CD4-positive, alpha-beta T cell (primary cell): ENCODE measurements at regions of chr19 and their contacts with region 1.

Region 1: DNA sequence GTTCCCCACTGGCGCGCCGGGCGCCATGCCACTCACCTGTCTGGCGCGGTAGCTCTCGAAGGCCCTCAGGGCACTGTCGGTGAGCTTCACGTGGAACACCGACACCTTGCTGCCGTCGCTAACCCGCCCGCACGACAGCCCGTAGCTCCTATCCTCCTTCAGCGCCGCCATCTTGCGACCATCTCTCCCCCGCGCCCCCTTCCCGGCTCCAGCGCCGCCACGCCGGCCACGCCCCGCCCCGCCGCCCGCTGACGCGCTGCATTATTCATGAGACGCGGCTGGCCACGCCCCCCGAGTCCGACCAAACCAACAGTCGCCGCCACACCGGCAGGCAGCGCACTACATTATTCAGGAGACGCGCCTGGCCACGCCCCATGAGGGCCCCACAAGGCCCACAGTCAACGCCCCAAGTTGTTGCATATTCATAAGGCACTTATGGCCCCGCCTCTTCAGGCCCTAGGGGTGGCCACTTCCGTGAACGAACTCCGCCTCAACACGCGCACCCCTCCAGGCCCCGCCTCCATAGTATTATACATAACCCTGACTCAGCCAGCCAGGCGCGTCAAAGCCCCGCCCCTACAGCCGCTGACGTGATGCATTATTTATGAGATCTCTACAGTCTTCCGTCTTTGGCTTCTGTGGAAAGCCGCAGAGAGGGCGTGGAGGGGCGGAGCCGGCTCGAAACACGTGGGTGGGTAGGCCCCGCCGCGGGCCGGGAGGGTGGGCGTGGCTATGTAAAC is at the start of gene ELL:
- DNase-seq: peak; percentile 100
- ATAC-seq: peak; percentile 87
- H3K4me3 ChIP-seq: peak within 1 kb of the TSS; percentile 79
- H3K4me3 Mint-ChIP-seq: peak within 1 kb of the TSS; percentile 97
- H3K27ac ChIP-seq: peak within 1 kb of the TSS; percentile 90 to 95
- H3K27ac Mint-ChIP-seq: peak within 1 kb of the TSS; percentile 86
- H3K4me1 ChIP-seq: peaks cover 46% of the 10 kb centered on the region
- H3K4me1 Mint-ChIP-seq: peaks cover 13% of the 10 kb centered on the region
- H3K27me3 ChIP-seq: no peaks in the 10 kb centered on the region
- H3K27me3 Mint-ChIP-seq: no peaks in the 10 kb centered on the region
- CTCF ChIP-seq: no peak
- total RNA-seq, gene ELL: 46.2 to 46.8 TPM

Region 2: GRCh38 chr19:18483119-18483890 is 38.8 kb before region 1 on chr19:
- CTCF ChIA-PET with region 1: interaction called, 15 read pairs
- POLR2A ChIA-PET with region 1: interaction called, 3 read pairs
- intact Hi-C with region 1: no loop called
- DNase-seq: peak in 1 of 14 experiments; percentile 29
- ATAC-seq: no peak
- H3K4me3 ChIP-seq: no peak overlapping the region
- H3K4me3 Mint-ChIP-seq: no peak overlapping the region
- H3K27ac ChIP-seq: no peak overlapping the region
- H3K27ac Mint-ChIP-seq: no peak overlapping the region
- H3K4me1 ChIP-seq: peaks cover 90% of the 10 kb centered on the region
- H3K4me1 Mint-ChIP-seq: peaks cover 67% of the 10 kb centered on the region
- H3K27me3 ChIP-seq: no peaks in the 10 kb centered on the region
- H3K27me3 Mint-ChIP-seq: no peaks in the 10 kb centered on the region
- CTCF ChIP-seq: no peak

Region 3: DNA sequence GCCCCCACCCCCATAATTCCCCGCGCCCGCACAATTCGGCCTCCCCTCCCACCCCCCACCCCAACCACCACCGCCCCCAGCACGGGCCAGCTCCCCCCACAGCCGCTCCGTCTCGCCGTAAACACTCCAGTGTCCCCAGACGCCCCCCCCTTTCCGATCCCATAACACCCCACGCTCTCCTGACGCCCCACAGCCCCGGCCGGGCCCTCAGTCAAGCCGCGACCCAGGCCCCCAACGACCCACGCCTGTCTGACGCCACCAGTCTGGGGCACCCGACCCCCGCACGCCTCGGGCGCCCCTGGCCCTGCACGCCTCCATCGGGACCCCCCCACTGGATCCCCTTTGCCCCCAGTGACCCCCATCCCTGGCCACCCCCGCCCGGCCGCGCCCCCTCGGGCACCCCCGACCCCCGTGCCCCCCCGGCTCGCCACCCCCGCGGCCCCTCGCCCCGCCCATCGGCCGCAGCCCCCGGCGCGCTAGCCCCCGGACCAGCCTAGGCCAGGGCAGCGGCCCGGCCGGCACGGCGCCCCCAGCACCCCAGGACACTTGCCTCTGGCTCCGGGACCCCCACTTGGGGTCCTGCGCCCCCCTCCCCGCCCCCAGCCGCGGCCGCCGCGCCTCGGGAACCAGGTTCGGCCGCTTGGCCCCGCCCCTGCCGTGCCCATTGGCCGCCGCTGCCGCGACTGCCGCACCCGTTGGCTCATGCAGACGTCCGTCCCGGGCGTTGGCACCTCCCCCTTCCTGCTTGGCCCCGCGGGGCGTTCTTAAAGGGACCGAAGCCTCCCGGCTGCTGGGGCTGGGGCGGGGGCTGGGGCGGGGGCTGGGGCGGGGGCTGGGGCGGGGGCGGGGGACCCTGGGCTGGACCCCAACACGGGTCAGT is 21.1 kb after region 1 on chr19 and contains the start of gene FKBP8:
- CTCF ChIA-PET with region 1: interaction called, 5 read pairs
- POLR2A ChIA-PET with region 1: interaction called, 18 read pairs
- intact Hi-C with region 1: loop called (anchors 1 kb)
- DNase-seq: peak; percentile 89 to 97 (median 94)
- ATAC-seq: peak; percentile 93
- H3K4me3 ChIP-seq: peak within 1 kb of the TSS; percentile 63
- H3K4me3 Mint-ChIP-seq: peak within 1 kb of the TSS; percentile 98
- H3K27ac ChIP-seq: peak within 1 kb of the TSS; percentile 66 to 85
- H3K27ac Mint-ChIP-seq: peak within 1 kb of the TSS; percentile 96
- H3K4me1 ChIP-seq: peaks cover 28% of the 10 kb centered on the region
- H3K4me1 Mint-ChIP-seq: peaks cover 27% of the 10 kb centered on the region
- H3K27me3 ChIP-seq: no peaks in the 10 kb centered on the region
- H3K27me3 Mint-ChIP-seq: no peaks in the 10 kb centered on the region
- CTCF ChIP-seq: no peak
- total RNA-seq, gene FKBP8: 147 to 152 TPM

Region 4: GRCh38 chr19:18588611-18589379 is 66.7 kb after region 1 on chr19 and contains the start of gene REX1BD:
- CTCF ChIA-PET with region 1: interaction called, 17 read pairs
- POLR2A ChIA-PET with region 1: interaction called, 59 read pairs
- intact Hi-C with region 1: loop called (anchors 1 to 5 kb)
- DNase-seq: peak; percentile 70 to 95 (median 87)
- ATAC-seq: peak; percentile 77
- H3K4me3 ChIP-seq: peak within 1 kb of the TSS; percentile 76
- H3K4me3 Mint-ChIP-seq: peak within 1 kb of the TSS; percentile 95
- H3K27ac ChIP-seq: peak within 1 kb of the TSS; percentile 80 to 88
- H3K27ac Mint-ChIP-seq: peak within 1 kb of the TSS; percentile 95
- H3K4me1 ChIP-seq: peaks cover 48% of the 10 kb centered on the region
- H3K4me1 Mint-ChIP-seq: peaks cover 42% of the 10 kb centered on the region
- H3K27me3 ChIP-seq: no peaks in the 10 kb centered on the region
- H3K27me3 Mint-ChIP-seq: no peaks in the 10 kb centered on the region
- CTCF ChIP-seq: peak; percentile 83
- total RNA-seq, gene REX1BD: 88.4 to 88.9 TPM

Region 5: DNA sequence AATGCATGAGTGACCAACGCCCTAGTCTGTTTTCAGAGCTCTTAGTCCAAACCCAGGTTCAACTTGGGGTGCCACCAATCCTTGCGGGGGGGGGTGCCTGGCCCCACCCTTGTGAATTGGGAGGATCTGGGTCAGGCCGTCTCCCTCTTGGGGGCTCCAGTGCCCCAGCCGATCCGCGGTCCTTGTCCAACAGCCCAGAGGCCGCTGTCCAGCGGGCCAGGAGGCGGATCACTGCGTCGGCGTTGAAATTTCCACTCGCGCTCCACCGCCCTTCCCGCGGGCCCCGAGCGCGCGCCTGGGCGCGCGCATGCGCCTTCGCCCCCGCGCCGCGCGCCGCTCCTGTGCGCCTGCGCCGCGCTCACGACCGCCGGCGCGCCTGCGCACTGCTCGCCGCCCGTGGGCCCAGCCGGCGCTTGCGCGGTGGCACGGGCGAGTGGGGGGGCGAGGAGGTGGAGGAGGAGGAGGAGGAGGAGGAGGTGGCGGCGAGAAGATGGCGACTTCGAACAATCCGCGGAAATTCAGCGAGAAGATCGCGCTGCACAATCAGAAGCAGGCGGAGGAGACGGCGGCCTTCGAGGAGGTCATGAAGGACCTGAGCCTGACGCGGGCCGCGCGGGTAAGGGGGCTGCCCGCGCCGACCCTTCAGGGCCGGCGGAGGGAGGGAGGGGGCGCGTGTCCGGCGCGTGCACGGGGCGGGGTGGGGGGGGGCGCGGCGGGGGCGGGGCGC is 161.3 kb after region 1 on chr19 and contains the start of gene CRTC1:
- CTCF ChIA-PET with region 1: interaction called, 3 read pairs
- POLR2A ChIA-PET with region 1: no interaction called
- intact Hi-C with region 1: loop called in 1 of 2 experiments (anchors 2 kb)
- DNase-seq: peak; percentile 92 to 97 (median 94)
- ATAC-seq: peak; percentile 86
- H3K4me3 ChIP-seq: peak within 1 kb of the TSS; percentile 76
- H3K4me3 Mint-ChIP-seq: peak within 1 kb of the TSS; percentile 92
- H3K27ac ChIP-seq: peak within 1 kb of the TSS; percentile 29 to 65
- H3K27ac Mint-ChIP-seq: peak within 1 kb of the TSS; percentile 77
- H3K4me1 ChIP-seq: peaks cover 30% of the 10 kb centered on the region
- H3K4me1 Mint-ChIP-seq: peaks cover 36% of the 10 kb centered on the region
- H3K27me3 ChIP-seq: no peaks in the 10 kb centered on the region
- H3K27me3 Mint-ChIP-seq: no peaks in the 10 kb centered on the region
- CTCF ChIP-seq: no peak
- total RNA-seq, gene CRTC1: 11.8 to 12.2 TPM

Region 6: DNA sequence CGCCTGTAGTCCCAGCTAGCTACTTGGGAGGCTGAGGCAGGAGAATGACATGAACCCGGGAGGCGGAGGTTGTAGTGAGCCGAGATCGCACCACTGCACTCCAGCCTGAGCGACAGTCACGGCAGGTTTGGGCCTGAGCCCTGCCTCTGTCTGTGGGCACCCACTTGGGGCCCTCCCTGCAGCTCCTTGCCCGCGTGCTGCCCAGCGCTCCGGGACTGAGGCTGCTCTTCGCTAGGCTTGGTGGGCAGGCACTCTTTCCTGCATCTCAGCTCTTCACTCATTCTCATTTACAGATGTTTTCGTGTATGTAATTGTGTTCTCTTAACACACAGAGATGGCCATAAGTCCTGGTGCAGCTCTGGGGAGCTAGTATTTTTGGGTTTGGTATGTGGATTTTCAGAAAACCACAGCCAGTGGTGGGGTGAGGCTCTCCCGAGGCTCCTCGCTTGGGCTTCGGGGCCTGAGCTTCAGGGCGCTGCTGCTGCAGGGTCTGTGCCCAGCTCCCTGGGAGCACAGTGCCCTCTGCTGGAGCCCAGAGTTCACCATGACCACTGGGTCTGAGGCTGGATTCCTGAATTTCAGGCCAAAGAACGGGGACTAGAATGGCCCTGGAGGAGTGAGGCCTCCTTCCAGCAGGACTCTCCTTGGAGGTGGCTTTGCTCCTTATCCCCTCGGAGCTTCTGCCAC is 324.9 kb after region 1 on chr19:
- CTCF ChIA-PET with region 1: interaction called, 4 read pairs
- POLR2A ChIA-PET with region 1: interaction called, 4 read pairs
- intact Hi-C with region 1: loop called (anchors 2 kb)
- DNase-seq: peak; percentile 45 to 82 (median 63)
- ATAC-seq: peak; percentile 71
- H3K4me3 ChIP-seq: no peak overlapping the region
- H3K4me3 Mint-ChIP-seq: peak overlapping the region; percentile 74
- H3K27ac ChIP-seq: no peak overlapping the region
- H3K27ac Mint-ChIP-seq: peak overlapping the region; percentile 68
- H3K4me1 ChIP-seq: peaks cover 75% of the 10 kb centered on the region
- H3K4me1 Mint-ChIP-seq: peaks cover 59% of the 10 kb centered on the region
- H3K27me3 ChIP-seq: no peaks in the 10 kb centered on the region
- H3K27me3 Mint-ChIP-seq: no peaks in the 10 kb centered on the region
- CTCF ChIP-seq: peak; percentile 69

Region 7: GRCh38 chr19:18859676-18860301 is 337.7 kb after region 1 on chr19:
- CTCF ChIA-PET with region 1: no interaction called
- POLR2A ChIA-PET with region 1: no interaction called
- intact Hi-C with region 1: no loop called
- DNase-seq: no peak
- ATAC-seq: no peak
- H3K4me3 ChIP-seq: no peak overlapping the region
- H3K4me3 Mint-ChIP-seq: no peak overlapping the region
- H3K27ac ChIP-seq: no peak overlapping the region
- H3K27ac Mint-ChIP-seq: no peak overlapping the region
- H3K4me1 ChIP-seq: no peaks in the 10 kb centered on the region
- H3K4me1 Mint-ChIP-seq: no peaks in the 10 kb centered on the region
- H3K27me3 ChIP-seq: no peaks in the 10 kb centered on the region
- H3K27me3 Mint-ChIP-seq: no peaks in the 10 kb centered on the region
- CTCF ChIP-seq: no peak